PC-3 (cell line): ENCODE measurements at regions of chr3 and their contacts with region 1.

Region 1: GRCh38 chr3:114231616-114232015 is 5.8 kb downstream of the ZNF80 start:
- DNase-seq: no peak
- ATAC-seq: no peak
- H3K4me3 ChIP-seq: no peak overlapping the region
- H3K27ac ChIP-seq: no peak overlapping the region
- H3K4me1 ChIP-seq: no peaks in the 10 kb centered on the region
- H3K27me3 ChIP-seq: peaks cover 19% of the 10 kb centered on the region
- CTCF ChIP-seq: no peak

Region 2: GRCh38 chr3:114252954-114253353 is 21.3 kb after region 1 on chr3:
- CTCF ChIA-PET with region 1: no interaction called
- POLR2A ChIA-PET with region 1: interaction called, 11 read pairs
- intact Hi-C with region 1: no loop called
- DNase-seq: no peak
- ATAC-seq: no peak
- H3K4me3 ChIP-seq: no peak overlapping the region
- H3K27ac ChIP-seq: no peak overlapping the region
- H3K4me1 ChIP-seq: no peaks in the 10 kb centered on the region
- H3K27me3 ChIP-seq: no peaks in the 10 kb centered on the region
- CTCF ChIP-seq: no peak

Region 3: GRCh38 chr3:114362815-114363214 is 131.2 kb after region 1 on chr3:
- CTCF ChIA-PET with region 1: no interaction called
- POLR2A ChIA-PET with region 1: no interaction called
- intact Hi-C with region 1: no loop called
- DNase-seq: peak; percentile 37
- ATAC-seq: peak; percentile 81
- H3K4me3 ChIP-seq: no peak overlapping the region
- H3K27ac ChIP-seq: no peak overlapping the region
- H3K4me1 ChIP-seq: no peaks in the 10 kb centered on the region
- H3K27me3 ChIP-seq: peaks cover 6% of the 10 kb centered on the region
- CTCF ChIP-seq: peak; percentile 74